Left lung (tissue), 14 donors: ENCODE measurements at regions of chr4 and their contacts with region 1.

Region 1: DNA sequence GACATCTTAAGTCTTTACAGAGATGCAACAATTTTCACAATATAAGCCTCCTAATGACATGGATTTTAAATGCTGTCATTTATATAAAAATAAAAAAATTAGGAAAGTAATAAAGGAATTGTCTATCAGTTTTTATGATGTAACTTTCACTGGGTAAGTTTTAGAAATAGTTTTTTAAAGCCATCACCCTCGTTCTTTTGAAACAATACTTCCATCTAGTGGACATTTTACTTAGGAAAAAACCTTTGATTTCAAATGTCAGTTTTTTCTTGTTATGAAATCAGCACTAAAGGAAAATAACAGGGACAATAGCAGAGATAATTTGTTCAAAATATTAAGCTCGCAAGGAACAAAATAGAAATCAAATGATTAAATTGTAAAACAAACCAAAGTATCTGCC is 24.3 kb upstream of the NDNF start:
- DNase-seq: peak in 1 of 4 donors; percentile 54
- ATAC-seq: peak; percentile 59
- H3K4me3 ChIP-seq: no peak overlapping the region
- H3K27ac ChIP-seq: no peak overlapping the region
- H3K4me1 ChIP-seq: peaks cover 0 to 13% of the 10 kb centered on the region in 2 donors
- H3K27me3 ChIP-seq: no peaks in the 10 kb centered on the region
- CTCF ChIP-seq: peak; percentile 48 to 53

Region 2: DNA sequence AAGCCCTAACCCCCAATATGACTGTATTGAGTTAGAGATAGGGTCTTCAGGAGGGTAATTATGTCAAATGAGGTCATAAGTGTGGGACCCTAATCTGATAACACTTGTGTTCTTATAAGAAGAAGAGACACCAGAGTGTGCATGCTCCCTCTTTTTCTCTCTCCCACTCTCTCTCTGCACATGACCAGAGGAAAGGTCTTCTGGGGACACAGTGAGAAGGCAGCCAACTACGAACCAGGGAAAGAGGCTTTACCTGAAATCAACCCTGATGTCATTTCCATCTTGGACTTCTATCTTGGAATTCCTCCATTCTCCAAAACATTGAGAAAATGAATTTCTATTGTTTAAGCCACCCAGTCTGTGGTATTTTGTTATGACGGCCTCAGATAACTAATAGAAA is 932.7 kb before region 1 on chr4:
- intact Hi-C with region 1: loop called in 1 of 2 experiments (anchors 10 kb)
- DNase-seq: no peak
- ATAC-seq: no peak
- H3K4me3 ChIP-seq: no peak overlapping the region
- H3K27ac ChIP-seq: no peak overlapping the region
- H3K4me1 ChIP-seq: no peaks in the 10 kb centered on the region
- H3K27me3 ChIP-seq: no peaks in the 10 kb centered on the region
- CTCF ChIP-seq: no peak